ENCODE measurements at regions of chr17 and their contacts with region 1.

Region 1: GRCh38 chr17:29369831-29370735 is 20.1 kb upstream of the TAOK1 start:
- DNase-seq: peak; percentile 50
- ATAC-seq: peak; percentile 98
- H3K4me3 ChIP-seq: no peak overlapping the region
- H3K27ac ChIP-seq: no peak overlapping the region
- H3K4me1 ChIP-seq: no peaks in the 10 kb centered on the region
- H3K27me3 ChIP-seq: no peaks in the 10 kb centered on the region
- CTCF ChIP-seq: peak; percentile 74 to 85 (median 76)
- EP300 ChIP-seq: no peak
- POLR2A ChIP-seq: no peak
- RAD21 ChIP-seq: peak; percentile 74

Region 2: GRCh38 chr17:29148790-29149430 is 221.2 kb before region 1 on chr17:
- CTCF ChIA-PET with region 1: interaction called, 19 read pairs
- POLR2A ChIA-PET with region 1: no interaction called
- RAD21 ChIA-PET with region 1: interaction called, 11 read pairs
- SMC1A ChIA-PET with region 1: interaction called, 3 read pairs
- in situ Hi-C with region 1: no loop called
- intact Hi-C with region 1: loop called (anchors 10 kb)
- DNase-seq: peak; percentile 79
- ATAC-seq: peak; percentile 90
- H3K4me3 ChIP-seq: peak overlapping the region; percentile 59
- H3K27ac ChIP-seq: peak overlapping the region; percentile 73
- H3K4me1 ChIP-seq: peaks cover 31% of the 10 kb centered on the region
- H3K27me3 ChIP-seq: no peaks in the 10 kb centered on the region
- CTCF ChIP-seq: peak; percentile 91 to 98 (median 97)
- EP300 ChIP-seq: no peak
- POLR2A ChIP-seq: peak; percentile 88
- RAD21 ChIP-seq: peak; percentile 88

Region 3: DNA sequence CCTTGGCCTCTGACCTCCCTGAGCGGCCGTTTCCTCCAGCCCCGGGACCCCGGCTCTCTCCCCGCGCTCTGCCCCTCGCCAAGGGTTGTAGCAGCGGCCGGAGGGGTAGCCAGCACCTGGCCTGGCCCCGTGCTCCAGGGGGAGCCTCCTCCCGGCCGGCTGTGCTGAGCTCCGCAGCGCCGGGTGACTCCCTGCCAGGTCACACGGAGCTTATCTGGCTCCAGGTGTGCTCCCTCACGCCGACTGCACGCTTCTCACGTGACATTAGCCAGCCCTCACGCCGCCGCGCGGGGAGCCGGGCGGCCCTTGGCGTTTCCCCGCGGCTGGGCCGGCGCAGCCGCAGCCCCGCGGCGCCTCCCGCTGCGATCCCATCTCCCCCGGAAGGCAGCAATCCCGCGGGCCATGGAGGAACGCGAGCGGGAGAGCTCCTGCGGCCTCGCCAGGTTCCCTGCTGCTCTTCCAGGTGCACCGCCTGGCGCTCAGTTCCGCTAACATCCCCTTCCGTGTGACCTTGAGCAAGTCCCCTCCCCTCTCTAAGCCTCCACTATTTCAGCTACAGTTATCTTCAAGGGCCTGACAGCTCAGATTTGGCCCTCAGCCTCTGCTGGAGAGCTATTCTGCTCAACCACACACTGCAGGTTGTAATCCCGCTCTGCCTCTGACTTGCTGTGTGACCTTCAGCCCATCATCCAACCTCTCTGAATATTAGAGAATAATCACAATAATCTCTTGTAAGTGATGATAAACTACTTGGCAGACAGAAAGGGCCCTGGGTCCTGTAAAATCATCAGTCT is 193.3 kb before region 1 on chr17:
- CTCF ChIA-PET with region 1: no interaction called
- POLR2A ChIA-PET with region 1: no interaction called
- RAD21 ChIA-PET with region 1: no interaction called
- SMC1A ChIA-PET with region 1: no interaction called
- in situ Hi-C with region 1: no loop called
- intact Hi-C with region 1: no loop called
- DNase-seq: no peak
- ATAC-seq: peak; percentile 77
- H3K4me3 ChIP-seq: peak overlapping the region; percentile 68; the same call in 1 of the 2 replicates
- H3K27ac ChIP-seq: peak overlapping the region; percentile 63
- H3K4me1 ChIP-seq: peaks cover 17% of the 10 kb centered on the region
- H3K27me3 ChIP-seq: no peaks in the 10 kb centered on the region
- CTCF ChIP-seq: no peak
- EP300 ChIP-seq: no peak
- POLR2A ChIP-seq: peak; percentile 87
- RAD21 ChIP-seq: no peak

Region 4: GRCh38 chr17:29384900-29385299 is 14.8 kb after region 1 on chr17:
- CTCF ChIA-PET with region 1: interaction called, 38 read pairs
- POLR2A ChIA-PET with region 1: interaction called, 3 read pairs
- RAD21 ChIA-PET with region 1: interaction called, 7 read pairs
- SMC1A ChIA-PET with region 1: interaction called, 10 read pairs
- in situ Hi-C with region 1: no loop called
- intact Hi-C with region 1: no loop called
- DNase-seq: no peak
- ATAC-seq: no peak
- H3K4me3 ChIP-seq: no peak overlapping the region
- H3K27ac ChIP-seq: no peak overlapping the region
- H3K4me1 ChIP-seq: no peaks in the 10 kb centered on the region
- H3K27me3 ChIP-seq: no peaks in the 10 kb centered on the region
- CTCF ChIP-seq: no peak
- EP300 ChIP-seq: no peak
- POLR2A ChIP-seq: no peak
- RAD21 ChIP-seq: no peak

Region 5: GRCh38 chr17:29475891-29476290 is 105.8 kb after region 1 on chr17:
- CTCF ChIA-PET with region 1: interaction called, 32 read pairs
- POLR2A ChIA-PET with region 1: no interaction called
- RAD21 ChIA-PET with region 1: no interaction called
- SMC1A ChIA-PET with region 1: interaction called, 11 read pairs
- in situ Hi-C with region 1: no loop called
- intact Hi-C with region 1: no loop called
- DNase-seq: no peak
- ATAC-seq: no peak
- H3K4me3 ChIP-seq: no peak overlapping the region
- H3K27ac ChIP-seq: no peak overlapping the region
- H3K4me1 ChIP-seq: no peaks in the 10 kb centered on the region
- H3K27me3 ChIP-seq: no peaks in the 10 kb centered on the region
- CTCF ChIP-seq: no peak
- EP300 ChIP-seq: no peak
- POLR2A ChIP-seq: no peak
- RAD21 ChIP-seq: no peak

Region 6: GRCh38 chr17:29524460-29525091 is 154.5 kb after region 1 on chr17:
- CTCF ChIA-PET with region 1: interaction called, 16 read pairs
- POLR2A ChIA-PET with region 1: no interaction called
- RAD21 ChIA-PET with region 1: no interaction called
- SMC1A ChIA-PET with region 1: interaction called, 10 read pairs
- in situ Hi-C with region 1: no loop called
- intact Hi-C with region 1: no loop called
- DNase-seq: no peak
- ATAC-seq: no peak
- H3K4me3 ChIP-seq: no peak overlapping the region
- H3K27ac ChIP-seq: no peak overlapping the region
- H3K4me1 ChIP-seq: no peaks in the 10 kb centered on the region
- H3K27me3 ChIP-seq: no peaks in the 10 kb centered on the region
- CTCF ChIP-seq: no peak
- EP300 ChIP-seq: no peak
- POLR2A ChIP-seq: no peak
- RAD21 ChIP-seq: no peak

Region 7: DNA sequence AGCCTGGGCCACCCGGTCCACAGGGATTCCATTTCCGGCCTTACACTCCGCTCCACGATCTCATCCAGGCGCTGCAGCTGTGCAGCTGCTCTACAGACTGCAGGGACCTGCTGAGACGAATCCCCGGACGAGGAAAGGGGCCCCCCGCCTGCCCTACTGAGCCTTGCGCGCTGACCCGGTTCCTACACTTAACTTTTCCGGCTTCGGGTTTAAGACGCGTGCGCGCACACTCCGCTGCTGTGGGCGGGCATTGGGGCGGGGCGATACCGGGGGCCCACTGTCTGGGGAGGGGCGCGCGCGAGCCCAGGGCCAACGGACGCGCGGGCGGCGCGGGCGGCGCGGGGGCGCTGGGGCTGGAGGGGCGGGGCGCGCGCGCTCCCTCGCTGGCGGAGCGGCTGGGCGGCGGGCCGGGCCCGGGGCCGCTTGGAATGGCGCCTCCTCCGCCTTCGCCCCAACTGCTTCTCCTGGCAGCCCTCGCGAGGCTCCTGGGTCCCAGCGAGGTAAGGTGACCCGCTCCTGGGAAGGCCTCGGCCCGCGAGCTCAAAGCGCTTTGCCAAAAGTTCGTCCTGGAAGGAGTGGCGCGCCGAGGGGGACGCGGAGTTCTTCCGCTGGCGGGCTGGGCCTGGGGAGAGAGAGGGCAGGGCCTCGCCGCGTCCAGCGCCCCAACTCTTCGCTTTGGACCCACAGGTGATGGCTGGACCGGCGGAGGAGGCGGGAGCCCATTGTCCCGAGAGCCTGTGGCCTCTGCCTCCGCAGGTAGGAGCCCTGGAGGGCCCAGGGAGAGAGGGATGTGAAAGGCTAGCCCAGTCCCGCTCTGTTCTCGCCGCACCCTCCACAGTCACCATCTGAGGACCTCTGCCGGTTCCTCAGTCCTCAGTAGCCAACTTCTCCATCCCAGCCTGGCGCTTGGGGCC is 198.5 kb after region 1 on chr17 and contains the start of gene TP53I13:
- CTCF ChIA-PET with region 1: interaction called, 57 read pairs
- POLR2A ChIA-PET with region 1: interaction called, 3 read pairs
- RAD21 ChIA-PET with region 1: interaction called, 21 read pairs
- SMC1A ChIA-PET with region 1: interaction called, 7 read pairs
- in situ Hi-C with region 1: no loop called
- intact Hi-C with region 1: no loop called
- DNase-seq: no peak
- ATAC-seq: peak; percentile 64
- H3K4me3 ChIP-seq: peak within 1 kb of the TSS; percentile 96
- H3K27ac ChIP-seq: peak within 1 kb of the TSS; percentile 81
- H3K4me1 ChIP-seq: peaks cover 6% of the 10 kb centered on the region; the same call in 1 of the 2 replicates
- H3K27me3 ChIP-seq: no peaks in the 10 kb centered on the region
- CTCF ChIP-seq: no peak
- EP300 ChIP-seq: no peak
- POLR2A ChIP-seq: peak; percentile 78
- RAD21 ChIP-seq: no peak
- polyA plus RNA-seq, gene TP53I13: 0.31 TPM in 1 of 2 experiments, not detected in the other